ENCODE measurements at regions of chr16 and their contacts with region 1.

Region 1: DNA sequence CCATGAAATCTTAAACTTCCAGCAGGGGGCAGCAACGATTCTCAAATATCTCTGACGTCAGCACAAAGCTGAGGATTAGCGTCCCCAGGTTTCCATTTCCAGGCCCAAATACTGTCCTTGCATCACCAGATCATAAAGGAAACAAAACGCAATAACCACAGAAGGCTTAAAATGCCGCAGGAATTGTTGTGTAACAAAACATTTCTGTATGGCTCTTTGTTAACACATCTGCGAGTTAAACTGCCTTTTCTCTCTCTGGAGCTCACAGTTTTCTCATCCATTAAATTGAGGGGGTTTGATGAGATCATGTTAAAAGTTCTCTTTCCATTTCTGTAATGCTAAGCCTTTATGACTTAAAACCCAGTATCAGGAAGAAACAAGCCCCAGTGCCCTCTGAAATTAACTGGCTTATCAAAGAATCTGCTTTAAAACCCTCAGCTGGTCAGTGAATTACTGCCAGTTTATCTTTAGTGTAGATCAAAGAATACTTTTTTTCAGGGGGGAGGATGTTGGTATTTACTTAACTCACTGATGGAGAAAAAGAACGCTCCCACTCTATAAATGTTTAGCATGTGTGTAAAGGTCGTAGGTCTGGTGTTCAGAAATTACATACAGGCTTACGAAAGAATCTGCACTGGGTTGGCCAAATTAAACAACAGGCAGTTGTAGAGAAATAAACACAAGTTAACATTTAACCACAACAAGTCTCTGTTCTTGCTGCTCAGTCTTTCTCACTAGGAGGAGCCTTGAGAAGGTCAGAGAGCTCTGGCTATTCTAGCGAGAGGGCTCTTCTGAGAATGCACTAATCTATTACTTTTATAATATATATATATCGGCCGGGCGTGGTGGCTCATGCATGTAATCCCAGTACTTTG is 10.6 kb upstream of the TERF2 start:
- DNase-seq: peak; percentile 65 to 89 (median 66)
- ATAC-seq: peak; percentile 76
- H3K4me3 ChIP-seq: no peak overlapping the region
- H3K27ac ChIP-seq: peak overlapping the region; percentile 42
- H3K4me1 ChIP-seq: peaks cover 0 to 7% of the 10 kb centered on the region in 2 experiments; a peak in 4 of 5 replicates
- H3K27me3 ChIP-seq: no peaks in the 10 kb centered on the region
- CTCF ChIP-seq: peak; percentile 52 to 83 (median 68)
- EP300 ChIP-seq: no peak
- POLR2A ChIP-seq: no peak
- RAD21 ChIP-seq: peak; percentile 64 to 78

Region 2: GRCh38 chr16:69339289-69340108 is 56.9 kb before region 1 on chr16 and contains the starts of genes COG8 and NIP7:
- CTCF ChIA-PET with region 1: no interaction called
- POLR2A ChIA-PET with region 1: no interaction called
- in situ Hi-C with region 1: no loop called
- intact Hi-C with region 1: no loop called
- DNase-seq: peak; percentile 79 to 98 (median 86)
- ATAC-seq: peak; percentile 98
- H3K4me3 ChIP-seq: peak within 1 kb of the TSS; percentile 94
- H3K27ac ChIP-seq: peak within 1 kb of the TSS; percentile 90
- H3K4me1 ChIP-seq: peaks cover 13% of the 10 kb centered on the region in 2 experiments
- H3K27me3 ChIP-seq: no peaks in the 10 kb centered on the region
- CTCF ChIP-seq: peak; percentile 72 to 84 (median 84)
- EP300 ChIP-seq: peak; percentile 65
- POLR2A ChIP-seq: peak; percentile 95
- RAD21 ChIP-seq: peak in 1 of 2 experiments; percentile 8; a peak in 1 of 4 replicates
- polyA plus RNA-seq, gene COG8: 3.7 to 5.7 TPM
- polyA plus RNA-seq, gene NIP7: 72.5 to 78.3 TPM

Region 3: DNA sequence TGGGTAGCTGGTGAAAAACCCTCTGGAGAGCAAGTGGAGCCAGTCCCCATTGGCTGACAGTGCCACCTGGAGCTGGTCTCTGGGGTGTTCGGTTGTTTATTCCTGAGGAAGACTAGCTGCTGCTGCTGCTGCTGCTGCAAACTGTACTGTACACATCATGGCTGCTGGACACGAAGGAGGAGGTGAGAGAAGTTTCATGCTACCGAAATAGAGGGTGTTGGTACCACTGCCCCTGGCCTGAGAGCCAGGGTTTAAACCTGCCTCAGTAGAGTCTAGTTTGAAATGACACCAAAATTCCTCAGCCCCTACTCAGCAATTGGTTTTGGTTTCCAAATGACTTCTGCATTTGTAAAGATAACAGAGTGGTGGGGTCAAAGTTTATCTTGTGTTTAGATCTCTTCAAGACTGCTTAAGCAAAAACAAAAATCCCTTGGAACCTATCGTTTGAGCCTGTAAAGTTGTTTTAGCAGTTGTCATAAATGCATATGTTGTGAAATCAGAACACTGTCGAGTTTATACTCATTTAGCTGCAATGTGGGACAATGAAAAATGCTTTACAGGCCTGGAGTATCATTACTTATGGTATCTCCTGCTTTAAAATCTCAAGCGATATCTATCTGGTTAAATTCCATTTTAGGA is 68.8 kb after region 1 on chr16:
- CTCF ChIA-PET with region 1: no interaction called
- POLR2A ChIA-PET with region 1: no interaction called
- in situ Hi-C with region 1: no loop called
- intact Hi-C with region 1: loop called (anchors 10 kb)
- DNase-seq: peak in 1 of 4 experiments; percentile 16
- ATAC-seq: peak; percentile 58
- H3K4me3 ChIP-seq: no peak overlapping the region
- H3K27ac ChIP-seq: no peak overlapping the region
- H3K4me1 ChIP-seq: peaks cover 4 to 8% of the 10 kb centered on the region in 2 experiments; a peak in 3 of 5 replicates
- H3K27me3 ChIP-seq: no peaks in the 10 kb centered on the region
- CTCF ChIP-seq: peak in 2 of 3 experiments; percentile 14 to 37; a peak in 1 of 6 replicates
- EP300 ChIP-seq: no peak
- POLR2A ChIP-seq: no peak
- RAD21 ChIP-seq: peak in 1 of 2 experiments; percentile 18; a peak in 2 of 4 replicates

Region 4: DNA sequence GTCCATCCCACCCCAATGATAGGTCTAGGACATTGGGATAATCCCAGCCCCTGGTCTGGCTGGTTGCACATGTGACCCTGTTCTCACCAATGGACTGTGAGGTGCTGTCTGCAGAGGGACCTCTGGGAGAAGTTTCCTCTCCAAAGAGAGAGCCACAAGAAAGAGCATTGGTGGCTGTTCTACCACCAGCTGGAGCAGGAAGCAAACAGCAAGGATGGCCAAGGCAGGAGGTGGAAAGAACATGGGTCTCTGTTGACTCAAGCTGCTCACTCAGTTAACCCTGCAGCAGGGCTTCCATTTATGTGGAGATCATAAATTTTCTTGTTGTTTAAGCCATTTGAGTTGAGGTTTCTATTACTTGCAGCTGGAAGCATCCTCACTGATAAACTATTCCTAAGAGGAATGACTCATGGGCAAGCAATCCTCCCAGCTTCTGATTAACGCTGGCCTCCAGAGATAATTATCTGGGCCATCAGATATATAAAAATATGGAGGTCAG is 80.5 kb after region 1 on chr16:
- CTCF ChIA-PET with region 1: no interaction called
- POLR2A ChIA-PET with region 1: no interaction called
- in situ Hi-C with region 1: no loop called
- intact Hi-C with region 1: no loop called
- DNase-seq: peak in 2 of 4 experiments; percentile 29 to 55
- ATAC-seq: peak; percentile 66
- H3K4me3 ChIP-seq: no peak overlapping the region
- H3K27ac ChIP-seq: no peak overlapping the region
- H3K4me1 ChIP-seq: peaks cover 11 to 13% of the 10 kb centered on the region in 2 experiments
- H3K27me3 ChIP-seq: no peaks in the 10 kb centered on the region
- CTCF ChIP-seq: no peak
- EP300 ChIP-seq: peak; percentile 60; the same call in 1 of the 2 replicates
- POLR2A ChIP-seq: no peak
- RAD21 ChIP-seq: no peak

Region 5: DNA sequence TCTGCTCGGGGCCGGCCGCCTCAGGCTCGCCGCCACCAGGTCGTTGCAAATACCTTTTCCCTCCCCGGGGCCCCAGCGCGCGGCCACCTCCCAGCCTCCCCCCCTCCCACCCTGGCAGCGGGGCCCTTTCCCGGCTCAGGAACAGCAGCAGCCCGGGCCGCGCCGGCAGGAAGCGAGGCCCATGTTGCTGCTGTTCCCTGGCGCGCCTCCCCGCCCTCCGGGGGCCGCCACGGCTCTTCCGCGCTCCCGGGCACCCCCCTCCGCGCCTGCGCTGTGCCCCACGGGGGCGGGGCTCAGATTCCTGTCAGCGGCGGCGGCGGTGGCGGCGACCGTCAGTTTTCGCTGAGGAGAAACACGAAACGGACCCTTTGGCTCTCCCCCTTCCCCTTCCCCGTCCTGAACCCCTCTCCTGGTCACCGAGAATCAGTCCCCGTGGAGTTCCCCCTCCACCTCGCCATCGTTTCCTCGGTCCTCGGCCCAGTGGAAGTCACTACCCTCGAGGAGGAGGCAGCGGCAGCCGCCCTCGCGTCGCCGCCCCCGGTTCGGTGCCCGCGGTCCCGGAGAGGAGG is 169.3 kb after region 1 on chr16 and contains the start of gene NFAT5:
- CTCF ChIA-PET with region 1: no interaction called
- POLR2A ChIA-PET with region 1: interaction called, 3 read pairs
- in situ Hi-C with region 1: no loop called
- intact Hi-C with region 1: loop called (anchors 5 kb)
- DNase-seq: peak; percentile 92 to 94 (median 92)
- ATAC-seq: peak; percentile 79
- H3K4me3 ChIP-seq: peak within 1 kb of the TSS; percentile 98
- H3K27ac ChIP-seq: peak within 1 kb of the TSS; percentile 97
- H3K4me1 ChIP-seq: peaks cover 9 to 20% of the 10 kb centered on the region in 2 experiments
- H3K27me3 ChIP-seq: no peaks in the 10 kb centered on the region
- CTCF ChIP-seq: peak in 1 of 3 experiments; percentile 18; a peak in 3 of 6 replicates
- EP300 ChIP-seq: peak; percentile 100
- POLR2A ChIP-seq: peak; percentile 91
- RAD21 ChIP-seq: peak; percentile 14 to 24; a peak in 1 of 4 replicates
- polyA plus RNA-seq, gene NFAT5: 0.78 to 1.6 TPM

Region 6: GRCh38 chr16:69754469-69755310 is 358.3 kb after region 1 on chr16 and contains the start of gene NOB1:
- CTCF ChIA-PET with region 1: interaction called, 8 read pairs
- POLR2A ChIA-PET with region 1: no interaction called
- in situ Hi-C with region 1: no loop called
- intact Hi-C with region 1: loop called (anchors 1 kb)
- DNase-seq: peak; percentile 94 to 98 (median 95)
- ATAC-seq: peak; percentile 97
- H3K4me3 ChIP-seq: peak within 1 kb of the TSS; percentile 95
- H3K27ac ChIP-seq: peak within 1 kb of the TSS; percentile 84
- H3K4me1 ChIP-seq: peaks cover 5 to 14% of the 10 kb centered on the region in 2 experiments; a peak in 4 of 5 replicates
- H3K27me3 ChIP-seq: no peaks in the 10 kb centered on the region
- CTCF ChIP-seq: peak; percentile 96 to 98 (median 98)
- EP300 ChIP-seq: no peak
- POLR2A ChIP-seq: peak; percentile 98
- RAD21 ChIP-seq: peak; percentile 97 to 98
- polyA plus RNA-seq, gene NOB1: 42.4 to 139 TPM